Gastrocnemius medialis (tissue), 4 donors: ENCODE measurements at regions of chr14 and their contacts with region 1.

Region 1: GRCh38 chr14:24806061-24806678 is 172.2 kb upstream of the GZMB start:
- DNase-seq: no peak
- ATAC-seq: no peak
- H3K4me3 ChIP-seq: no peak overlapping the region
- H3K27ac ChIP-seq: no peak overlapping the region
- H3K4me1 ChIP-seq: no peaks in the 10 kb centered on the region
- H3K27me3 ChIP-seq: no peaks in the 10 kb centered on the region
- CTCF ChIP-seq: peak; percentile 23 to 61 (median 51)
- POLR2A ChIP-seq: no peak

Region 2: DNA sequence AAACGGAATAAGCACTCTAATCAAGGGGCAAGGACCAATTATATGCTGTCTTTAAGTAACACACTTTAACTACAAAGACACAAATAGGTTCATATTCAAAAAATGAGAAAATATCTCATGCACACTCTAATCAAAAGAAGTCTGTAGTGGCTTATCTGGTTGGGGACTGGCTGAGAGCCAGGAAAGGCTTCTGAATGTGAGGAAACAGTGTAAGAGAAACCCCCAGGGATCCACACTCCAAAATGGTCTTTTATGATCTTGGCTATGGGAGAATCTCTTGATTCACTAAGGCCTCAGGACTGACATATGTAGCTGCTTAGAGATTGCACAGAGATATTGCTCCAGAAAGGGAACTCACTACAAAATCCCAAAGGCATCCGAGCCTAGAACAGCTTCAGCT is 240.4 kb before region 1 on chr14:
- in situ Hi-C with region 1: no loop called
- intact Hi-C with region 1: no loop called
- DNase-seq: no peak
- ATAC-seq: no peak
- H3K4me3 ChIP-seq: no peak overlapping the region
- H3K27ac ChIP-seq: no peak overlapping the region
- H3K4me1 ChIP-seq: no peaks in the 10 kb centered on the region
- H3K27me3 ChIP-seq: no peaks in the 10 kb centered on the region
- CTCF ChIP-seq: no peak
- POLR2A ChIP-seq: no peak

Region 3: DNA sequence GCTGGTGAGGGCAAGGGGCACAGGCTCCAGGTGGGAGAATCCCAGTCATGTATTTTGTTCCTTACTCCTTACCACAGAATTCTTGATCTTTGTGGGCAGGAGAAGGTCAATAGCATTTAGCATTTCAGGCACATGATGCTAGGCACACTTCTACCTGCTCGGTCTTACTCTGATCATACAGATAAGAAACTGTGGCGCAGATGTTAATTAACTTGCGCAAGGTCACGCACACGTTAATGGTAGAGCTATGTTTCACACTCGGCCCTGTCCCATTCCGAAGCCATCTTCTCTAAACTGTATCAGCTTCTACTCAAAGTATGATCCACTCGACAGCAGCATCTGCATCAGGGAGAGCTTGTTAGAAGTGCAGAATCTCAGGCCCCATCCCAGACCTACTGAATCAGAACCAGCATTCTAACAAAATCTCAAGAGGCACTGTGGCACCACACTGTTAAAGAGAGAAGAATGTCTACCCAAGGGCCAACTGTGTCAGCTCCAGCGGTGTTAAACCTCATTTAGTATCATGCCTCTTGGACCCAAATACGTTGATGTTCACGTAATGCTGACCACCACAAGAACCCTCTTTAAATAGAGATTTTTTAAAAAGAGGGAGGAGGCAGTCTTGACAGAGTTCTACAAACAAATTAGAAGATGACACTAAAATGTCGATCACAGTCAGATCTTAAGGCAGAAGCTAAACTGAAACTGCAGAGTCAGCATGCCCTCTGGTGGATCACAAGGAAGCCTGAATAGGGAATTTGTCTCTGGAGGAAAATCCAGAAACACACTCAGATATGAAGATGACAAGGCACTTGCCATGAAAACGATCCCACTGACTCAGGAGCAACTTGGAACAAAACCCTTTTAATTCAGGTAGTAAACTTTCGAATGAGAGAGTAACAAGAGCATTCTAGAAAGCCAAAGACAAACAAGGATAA is 236.5 kb after region 1 on chr14:
- in situ Hi-C with region 1: loop called in 2 of 4 experiments (anchors 5 to 10 kb)
- intact Hi-C with region 1: loop called (anchors 5 kb)
- DNase-seq: no peak
- ATAC-seq: no peak
- H3K4me3 ChIP-seq: no peak overlapping the region
- H3K27ac ChIP-seq: no peak overlapping the region
- H3K4me1 ChIP-seq: no peaks in the 10 kb centered on the region
- H3K27me3 ChIP-seq: no peaks in the 10 kb centered on the region
- CTCF ChIP-seq: peak in 1 of 5 experiments; percentile 35
- POLR2A ChIP-seq: no peak

Region 4: GRCh38 chr14:25132732-25133422 is 326.7 kb after region 1 on chr14:
- in situ Hi-C with region 1: loop called in 3 of 4 experiments (anchors 5 to 25 kb)
- intact Hi-C with region 1: loop called (anchors 2 kb)
- DNase-seq: peak; percentile 10 to 24
- ATAC-seq: peak; percentile 62 to 66
- H3K4me3 ChIP-seq: no peak overlapping the region
- H3K27ac ChIP-seq: no peak overlapping the region
- H3K4me1 ChIP-seq: no peaks in the 10 kb centered on the region
- H3K27me3 ChIP-seq: no peaks in the 10 kb centered on the region
- CTCF ChIP-seq: peak; percentile 32 to 74 (median 63)
- POLR2A ChIP-seq: no peak